Mammary epithelial cell (primary cell): ENCODE measurements at regions of chr4 and their contacts with region 1.

Region 1: GRCh38 chr4:149264093-149264733 is 551.4 kb downstream of the IQCM start:
- DNase-seq: peak; percentile 39
- H3K4me3 ChIP-seq: no peak overlapping the region
- H3K27ac ChIP-seq: no peak overlapping the region
- H3K4me1 ChIP-seq: no peaks in the 10 kb centered on the region
- H3K27me3 ChIP-seq: no peaks in the 10 kb centered on the region
- CTCF ChIP-seq: peak; percentile 61 to 73

Region 2: DNA sequence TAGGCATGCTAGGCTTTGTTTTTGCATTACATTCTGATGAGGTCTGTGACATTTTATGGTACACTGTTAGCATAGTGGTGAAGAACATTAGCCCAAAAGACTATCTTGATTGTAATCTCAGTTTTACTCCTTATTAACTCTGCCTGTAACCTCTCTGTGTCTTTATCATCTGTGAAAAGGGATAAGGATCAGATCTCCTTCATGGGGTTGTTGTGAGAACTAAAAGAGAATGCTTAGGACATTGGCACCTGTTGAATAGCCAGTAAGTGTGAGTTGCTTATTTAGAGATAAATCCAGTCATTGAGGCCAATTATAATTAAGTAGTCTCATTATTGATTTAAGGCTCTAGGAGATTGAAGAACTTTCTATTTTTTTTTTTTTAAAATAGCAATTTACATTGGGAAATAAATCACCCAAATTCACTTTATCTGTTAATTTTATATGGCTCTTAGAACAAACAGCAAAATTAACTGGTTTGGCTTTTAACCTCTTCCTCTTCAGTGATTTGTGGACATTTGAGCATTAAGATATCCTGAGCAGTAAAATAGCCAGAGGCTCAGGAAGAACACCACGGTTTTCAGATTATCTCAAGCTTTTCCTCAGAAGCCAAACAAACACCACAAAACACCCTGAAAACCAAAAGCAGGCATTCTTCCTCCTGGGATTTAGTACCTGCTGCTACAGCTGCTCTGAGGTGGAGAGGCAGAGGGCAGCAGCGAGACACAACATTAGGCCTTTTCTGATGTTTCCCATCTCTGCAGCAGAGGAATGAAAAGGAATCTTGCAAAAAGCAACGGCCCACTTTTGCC is 1339.4 kb before region 1 on chr4:
- CTCF ChIA-PET with region 1: no interaction called
- dilution Hi-C with region 1: no loop called
- in situ Hi-C with region 1: no loop called
- intact Hi-C with region 1: loop called (anchors 2 kb)
- DNase-seq: no peak
- H3K4me3 ChIP-seq: no peak overlapping the region
- H3K27ac ChIP-seq: no peak overlapping the region
- H3K4me1 ChIP-seq: no peaks in the 10 kb centered on the region
- H3K27me3 ChIP-seq: no peaks in the 10 kb centered on the region
- CTCF ChIP-seq: peak; percentile 21 to 45

Region 3: GRCh38 chr4:147984065-147984777 is 1280.0 kb before region 1 on chr4:
- CTCF ChIA-PET with region 1: no interaction called
- dilution Hi-C with region 1: no loop called
- in situ Hi-C with region 1: no loop called
- intact Hi-C with region 1: loop called (anchors 10 kb)
- DNase-seq: peak; percentile 23
- H3K4me3 ChIP-seq: no peak overlapping the region
- H3K27ac ChIP-seq: no peak overlapping the region
- H3K4me1 ChIP-seq: no peaks in the 10 kb centered on the region
- H3K27me3 ChIP-seq: no peaks in the 10 kb centered on the region
- CTCF ChIP-seq: peak; percentile 67 to 79

Region 4: DNA sequence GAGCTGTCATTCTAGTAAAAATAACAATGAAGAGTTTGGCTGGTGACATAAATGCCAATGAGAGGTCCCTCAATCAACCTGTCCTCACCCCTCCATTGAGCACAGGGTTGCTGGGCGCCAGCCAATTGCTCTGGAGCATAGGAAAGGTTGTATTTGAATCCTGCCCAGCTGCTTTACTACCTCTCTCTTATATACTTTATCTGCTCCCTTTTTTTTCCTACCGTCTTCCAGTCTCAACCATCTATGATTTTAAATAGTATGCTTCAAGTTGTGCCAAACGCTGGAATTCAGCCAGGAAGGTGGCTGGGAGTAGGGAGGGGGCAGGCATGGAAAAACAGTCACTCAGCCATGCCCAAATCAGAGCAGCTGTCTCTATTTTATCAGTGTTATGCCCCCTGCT is 975.8 kb before region 1 on chr4:
- CTCF ChIA-PET with region 1: no interaction called
- dilution Hi-C with region 1: no loop called
- in situ Hi-C with region 1: no loop called
- intact Hi-C with region 1: loop called (anchors 10 kb)
- DNase-seq: no peak
- H3K4me3 ChIP-seq: no peak overlapping the region
- H3K27ac ChIP-seq: no peak overlapping the region
- H3K4me1 ChIP-seq: no peaks in the 10 kb centered on the region
- H3K27me3 ChIP-seq: no peaks in the 10 kb centered on the region
- CTCF ChIP-seq: no peak

Region 5: GRCh38 chr4:148441986-148442831 is 822.0 kb before region 1 on chr4 and contains the start of gene NR3C2:
- CTCF ChIA-PET with region 1: no interaction called
- dilution Hi-C with region 1: no loop called
- in situ Hi-C with region 1: no loop called
- intact Hi-C with region 1: loop called (anchors 2 kb)
- DNase-seq: peak; percentile 94
- H3K4me3 ChIP-seq: peak within 1 kb of the TSS; percentile 52 to 87 (median 69)
- H3K27ac ChIP-seq: no peak within 1 kb of the TSS
- H3K4me1 ChIP-seq: peaks cover 26% of the 10 kb centered on the region
- H3K27me3 ChIP-seq: peaks cover 37% of the 10 kb centered on the region
- CTCF ChIP-seq: no peak
- total RNA-seq, gene NR3C2: 0.40 to 1.2 TPM

Region 6: GRCh38 chr4:148998719-148999118 is 265.5 kb before region 1 on chr4:
- CTCF ChIA-PET with region 1: no interaction called
- dilution Hi-C with region 1: no loop called
- in situ Hi-C with region 1: no loop called
- intact Hi-C with region 1: loop called (anchors 2 kb)
- DNase-seq: peak; percentile 0
- H3K4me3 ChIP-seq: no peak overlapping the region
- H3K27ac ChIP-seq: no peak overlapping the region
- H3K4me1 ChIP-seq: no peaks in the 10 kb centered on the region
- H3K27me3 ChIP-seq: no peaks in the 10 kb centered on the region
- CTCF ChIP-seq: peak; percentile 30 to 33

Region 7: DNA sequence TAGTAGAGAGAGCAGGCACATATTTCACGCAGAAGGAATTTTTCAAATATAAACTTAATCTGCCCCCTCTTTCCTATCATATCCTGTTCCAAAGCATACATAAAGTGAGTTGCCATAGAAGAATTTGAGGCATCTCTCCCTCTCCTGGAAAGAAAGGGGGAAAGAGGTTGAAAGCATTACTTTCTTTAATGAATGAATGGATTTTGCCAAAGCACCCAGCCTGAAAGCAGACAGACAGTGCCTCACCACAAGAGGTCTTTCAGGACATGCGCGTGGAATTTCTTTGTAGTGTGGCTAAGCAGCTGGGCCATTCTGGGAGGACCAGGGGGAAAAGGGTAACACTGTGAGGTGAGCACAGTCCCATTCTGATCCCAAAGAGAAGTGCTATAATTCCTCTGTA is 99.9 kb before region 1 on chr4:
- CTCF ChIA-PET with region 1: no interaction called
- dilution Hi-C with region 1: no loop called
- in situ Hi-C with region 1: no loop called
- intact Hi-C with region 1: no loop called
- DNase-seq: no peak
- H3K4me3 ChIP-seq: no peak overlapping the region
- H3K27ac ChIP-seq: no peak overlapping the region
- H3K4me1 ChIP-seq: no peaks in the 10 kb centered on the region
- H3K27me3 ChIP-seq: no peaks in the 10 kb centered on the region
- CTCF ChIP-seq: no peak

Region 8: GRCh38 chr4:149238097-149238496 is 26.1 kb before region 1 on chr4:
- CTCF ChIA-PET with region 1: no interaction called
- dilution Hi-C with region 1: no loop called
- in situ Hi-C with region 1: no loop called
- intact Hi-C with region 1: no loop called
- DNase-seq: no peak
- H3K4me3 ChIP-seq: no peak overlapping the region
- H3K27ac ChIP-seq: no peak overlapping the region
- H3K4me1 ChIP-seq: no peaks in the 10 kb centered on the region
- H3K27me3 ChIP-seq: peaks cover 2% of the 10 kb centered on the region
- CTCF ChIP-seq: no peak

Region 9: DNA sequence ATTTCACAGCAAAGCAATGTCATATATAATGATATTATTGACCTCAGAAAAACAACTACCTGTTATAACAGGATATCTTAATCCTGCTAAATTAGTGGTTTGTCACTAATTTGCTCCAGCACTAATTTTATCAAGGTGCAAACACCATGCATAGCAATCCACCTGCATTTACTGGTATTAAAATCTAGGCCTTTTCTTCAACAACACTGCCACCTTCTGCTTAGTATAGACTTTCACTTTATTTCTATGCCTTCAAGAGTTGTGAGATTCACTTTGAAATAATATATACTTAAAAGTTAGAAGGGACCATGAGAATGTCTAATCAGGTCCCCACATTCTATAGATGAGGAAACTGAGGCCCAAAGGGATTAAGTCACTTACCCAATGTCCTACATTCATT is 633.6 kb after region 1 on chr4:
- CTCF ChIA-PET with region 1: no interaction called
- dilution Hi-C with region 1: no loop called
- in situ Hi-C with region 1: no loop called
- intact Hi-C with region 1: loop called (anchors 1 kb)
- DNase-seq: peak; percentile 6
- H3K4me3 ChIP-seq: no peak overlapping the region
- H3K27ac ChIP-seq: no peak overlapping the region
- H3K4me1 ChIP-seq: no peaks in the 10 kb centered on the region
- H3K27me3 ChIP-seq: peaks cover 2% of the 10 kb centered on the region
- CTCF ChIP-seq: peak in 1 of 2 donors; percentile 49